CD4-positive, alpha-beta memory T cell (primary cell): ENCODE measurements at regions of chr6 and their contacts with region 1.

Region 1: GRCh38 chr6:35731736-35732532 is 4.9 kb upstream of the ARMC12 start:
- DNase-seq: peak; percentile 93 to 96 (median 94)
- H3K4me3 ChIP-seq: peak overlapping the region; percentile 30 to 85
- H3K4me3 Mint-ChIP-seq: peak overlapping the region; percentile 83 to 93 (median 88)
- H3K27ac ChIP-seq: peak overlapping the region; percentile 92
- H3K27ac Mint-ChIP-seq: peak overlapping the region; percentile 87 to 99 (median 96)
- H3K4me1 ChIP-seq: peaks cover 89% of the 10 kb centered on the region
- H3K4me1 Mint-ChIP-seq: peaks cover 50 to 92% (median 73%) of the 10 kb centered on the region in 4 donors
- H3K27me3 ChIP-seq: no peaks in the 10 kb centered on the region
- H3K27me3 Mint-ChIP-seq: no peaks in the 10 kb centered on the region

Region 2: GRCh38 chr6:35297601-35298481 is 434.1 kb before region 1 on chr6 and contains the start of gene DEF6:
- CTCF ChIA-PET with region 1: interaction called, 5 read pairs
- POLR2A ChIA-PET with region 1: interaction called, 8 read pairs
- intact Hi-C with region 1: loop called (anchors 2 kb)
- DNase-seq: peak; percentile 85 to 89 (median 86)
- H3K4me3 ChIP-seq: peak within 1 kb of the TSS; percentile 90 to 95
- H3K4me3 Mint-ChIP-seq: peak within 1 kb of the TSS; percentile 80 to 96 (median 94)
- H3K27ac ChIP-seq: peak within 1 kb of the TSS; percentile 88
- H3K27ac Mint-ChIP-seq: peak within 1 kb of the TSS; percentile 91 to 99 (median 98)
- H3K4me1 ChIP-seq: peaks cover 49% of the 10 kb centered on the region
- H3K4me1 Mint-ChIP-seq: peaks cover 23 to 57% (median 44%) of the 10 kb centered on the region in 4 donors
- H3K27me3 ChIP-seq: no peaks in the 10 kb centered on the region
- H3K27me3 Mint-ChIP-seq: no peaks in the 10 kb centered on the region
- total RNA-seq, gene DEF6: 231 to 236 TPM

Region 3: GRCh38 chr6:35522660-35523658 is 209.0 kb before region 1 on chr6:
- CTCF ChIA-PET with region 1: interaction called, 150 read pairs
- POLR2A ChIA-PET with region 1: interaction called, 15 read pairs
- intact Hi-C with region 1: loop called (anchors 1 kb)
- DNase-seq: peak; percentile 76 to 84 (median 82)
- H3K4me3 ChIP-seq: peak overlapping the region in 1 of 2 donors; percentile 41
- H3K4me3 Mint-ChIP-seq: peak overlapping the region; percentile 20 to 81 (median 75)
- H3K27ac ChIP-seq: no peak overlapping the region
- H3K27ac Mint-ChIP-seq: peak overlapping the region; percentile 76 to 93 (median 86)
- H3K4me1 ChIP-seq: peaks cover 21% of the 10 kb centered on the region
- H3K4me1 Mint-ChIP-seq: peaks cover 14 to 34% (median 21%) of the 10 kb centered on the region in 4 donors
- H3K27me3 ChIP-seq: no peaks in the 10 kb centered on the region
- H3K27me3 Mint-ChIP-seq: no peaks in the 10 kb centered on the region

Region 4: GRCh38 chr6:35601331-35602132 is 130.4 kb before region 1 on chr6:
- CTCF ChIA-PET with region 1: interaction called, 53 read pairs
- POLR2A ChIA-PET with region 1: interaction called, 151 read pairs
- intact Hi-C with region 1: loop called (anchors 2 kb)
- DNase-seq: peak; percentile 88 to 93 (median 89)
- H3K4me3 ChIP-seq: peak overlapping the region; percentile 33 to 47
- H3K4me3 Mint-ChIP-seq: peak overlapping the region; percentile 66 to 91 (median 86)
- H3K27ac ChIP-seq: peak overlapping the region; percentile 71
- H3K27ac Mint-ChIP-seq: peak overlapping the region; percentile 79 to 97 (median 92)
- H3K4me1 ChIP-seq: peaks cover 97% of the 10 kb centered on the region
- H3K4me1 Mint-ChIP-seq: peaks cover 55 to 79% (median 67%) of the 10 kb centered on the region in 4 donors
- H3K27me3 ChIP-seq: no peaks in the 10 kb centered on the region
- H3K27me3 Mint-ChIP-seq: no peaks in the 10 kb centered on the region

Region 5: DNA sequence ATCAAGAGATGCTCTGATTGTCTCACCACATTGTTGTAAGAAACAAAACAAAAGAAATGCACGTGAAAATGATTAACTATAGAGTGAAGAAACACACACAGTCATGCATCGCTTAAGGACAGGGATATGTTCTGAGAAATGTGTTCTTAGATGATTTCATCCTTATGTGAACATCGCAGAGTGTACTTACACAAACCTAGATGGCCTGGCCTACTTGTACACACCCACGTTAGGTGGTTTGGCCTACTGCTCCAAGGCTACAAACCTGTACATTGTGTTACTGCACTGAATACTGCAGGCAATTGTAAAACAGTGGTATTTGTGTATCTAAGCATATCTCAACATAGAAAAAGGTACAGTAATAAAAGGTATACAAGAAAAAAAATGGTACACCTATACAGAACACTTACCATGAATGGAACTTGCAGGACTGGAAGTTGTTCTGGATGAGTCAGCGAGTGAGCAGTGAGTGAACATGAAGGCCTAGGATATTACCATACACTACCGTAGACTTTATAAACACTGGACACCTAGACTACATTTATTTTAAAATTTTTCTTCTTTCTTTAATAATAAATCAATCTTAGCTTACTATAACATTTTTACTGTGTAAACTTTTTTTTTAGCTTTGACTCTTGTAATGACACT is 91.8 kb before region 1 on chr6:
- CTCF ChIA-PET with region 1: interaction called, 52 read pairs
- POLR2A ChIA-PET with region 1: interaction called, 11 read pairs
- intact Hi-C with region 1: no loop called
- DNase-seq: no peak
- H3K4me3 ChIP-seq: no peak overlapping the region
- H3K4me3 Mint-ChIP-seq: no peak overlapping the region
- H3K27ac ChIP-seq: no peak overlapping the region
- H3K27ac Mint-ChIP-seq: peak overlapping the region in 4 of 7 donors; percentile 7 to 78 (median 28)
- H3K4me1 ChIP-seq: peaks cover 64% of the 10 kb centered on the region
- H3K4me1 Mint-ChIP-seq: peaks cover 35 to 71% (median 60%) of the 10 kb centered on the region in 4 donors
- H3K27me3 ChIP-seq: no peaks in the 10 kb centered on the region
- H3K27me3 Mint-ChIP-seq: no peaks in the 10 kb centered on the region

Region 6: GRCh38 chr6:35683267-35683666 is 48.7 kb before region 1 on chr6:
- CTCF ChIA-PET with region 1: interaction called, 33 read pairs
- POLR2A ChIA-PET with region 1: interaction called, 141 read pairs
- intact Hi-C with region 1: loop called (anchors 1 kb)
- DNase-seq: no peak
- H3K4me3 ChIP-seq: no peak overlapping the region
- H3K4me3 Mint-ChIP-seq: peak overlapping the region in 5 of 8 donors; percentile 9 to 57 (median 57)
- H3K27ac ChIP-seq: no peak overlapping the region
- H3K27ac Mint-ChIP-seq: peak overlapping the region in 5 of 7 donors; percentile 37 to 79 (median 64)
- H3K4me1 ChIP-seq: peaks cover 74% of the 10 kb centered on the region
- H3K4me1 Mint-ChIP-seq: peaks cover 33 to 64% (median 36%) of the 10 kb centered on the region in 4 donors
- H3K27me3 ChIP-seq: no peaks in the 10 kb centered on the region
- H3K27me3 Mint-ChIP-seq: no peaks in the 10 kb centered on the region